Heart left ventricle (tissue), 16 donors: ENCODE measurements at regions of chr14 and their contacts with region 1.

Region 1: GRCh38 chr14:32469388-32470160 is 140.5 kb downstream of the AKAP6 start:
- DNase-seq: no peak
- ATAC-seq: peak in 2 of 4 donors; percentile 27 to 53
- H3K4me3 ChIP-seq: no peak overlapping the region
- H3K27ac ChIP-seq: peak overlapping the region in 10 of 12 donors; percentile 29 to 88 (median 72)
- H3K4me1 ChIP-seq: peaks cover 0 to 59% (median 23%) of the 10 kb centered on the region in 12 donors
- H3K27me3 ChIP-seq: no peaks in the 10 kb centered on the region
- CTCF ChIP-seq: peak; percentile 24 to 71 (median 62)
- POLR2A ChIP-seq: no peak

Region 2: GRCh38 chr14:31926123-31926522 is 543.5 kb before region 1 on chr14:
- intact Hi-C with region 1: loop called in 4 of 10 experiments (anchors 5 to 10 kb)
- DNase-seq: no peak
- ATAC-seq: no peak
- H3K4me3 ChIP-seq: no peak overlapping the region
- H3K27ac ChIP-seq: peak overlapping the region; percentile 6 to 91 (median 80)
- H3K4me1 ChIP-seq: peaks cover 6 to 42% (median 25%) of the 10 kb centered on the region in 12 donors
- H3K27me3 ChIP-seq: no peaks in the 10 kb centered on the region
- CTCF ChIP-seq: peak; percentile 28 to 61 (median 44)
- POLR2A ChIP-seq: no peak

Region 3: DNA sequence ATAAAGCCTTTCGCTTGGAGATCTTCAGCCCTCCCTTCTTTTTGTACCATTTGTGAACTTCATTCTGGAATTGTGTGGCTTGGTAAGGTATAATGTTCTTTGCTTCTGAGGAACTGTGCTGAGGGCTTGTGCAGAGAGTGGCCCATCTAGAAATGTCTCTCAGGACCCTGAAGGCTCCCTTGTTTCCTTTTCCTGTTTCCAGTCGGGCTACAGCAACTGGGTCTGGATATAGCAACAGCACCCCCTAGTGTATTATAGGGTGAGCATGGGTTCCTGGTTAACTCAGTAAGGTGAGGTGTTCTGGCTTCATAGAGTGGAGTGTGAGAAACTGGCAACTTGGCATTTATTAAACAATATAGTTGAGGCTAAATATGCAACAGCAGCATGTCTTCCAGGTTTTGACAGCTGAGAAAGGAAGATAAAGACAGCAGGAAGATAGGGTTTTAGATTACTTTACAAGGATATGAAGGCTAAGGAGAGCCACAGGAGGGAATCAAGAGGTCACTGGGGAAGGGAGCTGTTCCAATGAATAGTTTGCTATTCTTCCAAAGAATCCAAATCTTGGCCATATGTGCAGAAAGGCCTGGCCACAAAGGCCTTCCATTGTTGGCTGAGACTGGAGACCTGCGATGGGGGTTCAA is 217.4 kb before region 1 on chr14:
- intact Hi-C with region 1: loop called in 6 of 10 experiments (anchors 2 to 5 kb)
- DNase-seq: peak in 3 of 5 donors; percentile 37 to 56 (median 39)
- ATAC-seq: peak; percentile 63 to 84 (median 83)
- H3K4me3 ChIP-seq: no peak overlapping the region
- H3K27ac ChIP-seq: peak overlapping the region in 4 of 12 donors; percentile 0 to 63 (median 20)
- H3K4me1 ChIP-seq: peaks cover 0 to 30% (median 12%) of the 10 kb centered on the region in 12 donors
- H3K27me3 ChIP-seq: no peaks in the 10 kb centered on the region
- CTCF ChIP-seq: peak; percentile 66 to 90 (median 83)
- POLR2A ChIP-seq: no peak

Region 4: GRCh38 chr14:32509632-32510187 is 40.1 kb after region 1 on chr14:
- intact Hi-C with region 1: loop called in 1 of 10 experiments (anchors 5 kb)
- DNase-seq: peak in 4 of 5 donors; percentile 52 to 81 (median 57)
- ATAC-seq: peak; percentile 84 to 92 (median 90)
- H3K4me3 ChIP-seq: peak overlapping the region in 7 of 12 donors; percentile 2 to 39 (median 15)
- H3K27ac ChIP-seq: peak overlapping the region; percentile 61 to 96 (median 84)
- H3K4me1 ChIP-seq: peaks cover 0 to 75% (median 23%) of the 10 kb centered on the region in 12 donors
- H3K27me3 ChIP-seq: no peaks in the 10 kb centered on the region
- CTCF ChIP-seq: no peak
- POLR2A ChIP-seq: no peak

Region 5: DNA sequence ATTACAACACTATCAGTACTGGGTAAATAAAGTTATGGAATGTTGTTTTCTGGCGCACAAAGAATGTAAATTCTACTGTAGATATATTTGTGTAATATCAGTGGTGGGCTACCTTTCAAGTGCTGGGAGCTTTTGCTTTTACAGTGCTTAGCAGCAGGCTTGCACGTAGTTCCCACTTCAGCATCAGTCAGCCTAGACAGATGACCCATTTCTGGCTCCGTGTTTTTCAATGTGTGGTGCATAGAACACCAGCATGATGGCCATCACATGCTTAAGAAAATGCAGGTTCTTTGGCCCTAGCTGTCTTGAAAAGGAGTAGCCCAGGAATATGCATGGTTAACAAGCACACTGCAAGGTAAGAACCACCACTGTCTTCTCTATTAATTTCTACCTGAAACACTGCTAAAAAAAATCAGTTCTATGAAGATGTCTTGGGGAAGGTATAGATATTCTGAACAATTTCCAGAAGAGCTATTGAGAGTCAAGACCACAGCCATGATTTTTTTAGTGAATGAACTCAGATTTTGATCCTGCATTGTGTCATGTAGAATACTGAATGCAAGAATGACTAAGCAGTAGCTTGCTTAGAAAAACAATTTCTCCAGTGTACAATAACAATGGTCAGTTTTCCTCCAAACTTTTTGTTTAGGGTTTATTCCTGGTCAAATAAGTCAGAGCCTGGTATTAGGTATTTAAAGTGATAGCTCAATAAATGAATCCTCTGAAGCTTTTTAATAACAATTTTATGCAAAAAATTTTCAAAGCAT is 55.2 kb after region 1 on chr14:
- intact Hi-C with region 1: no loop called
- DNase-seq: no peak
- ATAC-seq: peak in 3 of 4 donors; percentile 24 to 42 (median 36)
- H3K4me3 ChIP-seq: no peak overlapping the region
- H3K27ac ChIP-seq: peak overlapping the region in 2 of 12 donors; percentile 18 to 37
- H3K4me1 ChIP-seq: peaks cover 0 to 16% (median 2%) of the 10 kb centered on the region in 12 donors
- H3K27me3 ChIP-seq: no peaks in the 10 kb centered on the region
- CTCF ChIP-seq: no peak
- POLR2A ChIP-seq: no peak